A549 (cell line): ENCODE measurements at regions of chr12 and their contacts with region 1.

Region 1: DNA sequence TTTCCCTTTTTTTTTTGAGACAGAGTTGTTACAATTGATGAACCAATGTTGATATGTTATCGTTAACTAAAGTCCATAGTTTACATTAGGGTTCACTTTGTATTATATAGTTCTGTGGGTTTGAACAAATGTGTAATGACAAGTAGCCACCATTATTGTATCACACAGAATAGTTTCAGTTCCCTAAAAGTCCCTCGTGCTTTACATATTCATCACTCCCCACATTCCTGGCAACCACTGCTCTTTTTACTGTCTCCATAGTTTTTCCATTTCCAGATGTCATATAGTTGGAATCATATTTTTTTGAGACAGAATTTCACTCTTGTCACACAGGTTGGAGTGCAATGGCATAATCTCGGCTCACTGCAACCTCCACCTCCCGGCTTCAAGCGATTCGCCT is 12.5 kb downstream of the HSD17B6 start:
- DNase-seq: no peak
- ATAC-seq: no peak
- H3K4me3 ChIP-seq: no peak overlapping the region
- H3K27ac ChIP-seq: no peak overlapping the region
- H3K4me1 ChIP-seq: no peaks in the 10 kb centered on the region
- CTCF ChIP-seq: no peak
- EP300 ChIP-seq: no peak
- POLR2A ChIP-seq: no peak
- RAD21 ChIP-seq: no peak

Region 2: GRCh38 chr12:56198836-56199235 is 576.8 kb before region 1 on chr12:
- CTCF ChIA-PET with region 1: no interaction called
- POLR2A ChIA-PET with region 1: no interaction called
- DNase-seq: no peak
- ATAC-seq: no peak
- H3K4me3 ChIP-seq: no peak overlapping the region
- H3K27ac ChIP-seq: no peak overlapping the region
- H3K4me1 ChIP-seq: no peaks in the 10 kb centered on the region
- CTCF ChIP-seq: no peak
- EP300 ChIP-seq: no peak
- POLR2A ChIP-seq: no peak
- RAD21 ChIP-seq: no peak

Region 3: DNA sequence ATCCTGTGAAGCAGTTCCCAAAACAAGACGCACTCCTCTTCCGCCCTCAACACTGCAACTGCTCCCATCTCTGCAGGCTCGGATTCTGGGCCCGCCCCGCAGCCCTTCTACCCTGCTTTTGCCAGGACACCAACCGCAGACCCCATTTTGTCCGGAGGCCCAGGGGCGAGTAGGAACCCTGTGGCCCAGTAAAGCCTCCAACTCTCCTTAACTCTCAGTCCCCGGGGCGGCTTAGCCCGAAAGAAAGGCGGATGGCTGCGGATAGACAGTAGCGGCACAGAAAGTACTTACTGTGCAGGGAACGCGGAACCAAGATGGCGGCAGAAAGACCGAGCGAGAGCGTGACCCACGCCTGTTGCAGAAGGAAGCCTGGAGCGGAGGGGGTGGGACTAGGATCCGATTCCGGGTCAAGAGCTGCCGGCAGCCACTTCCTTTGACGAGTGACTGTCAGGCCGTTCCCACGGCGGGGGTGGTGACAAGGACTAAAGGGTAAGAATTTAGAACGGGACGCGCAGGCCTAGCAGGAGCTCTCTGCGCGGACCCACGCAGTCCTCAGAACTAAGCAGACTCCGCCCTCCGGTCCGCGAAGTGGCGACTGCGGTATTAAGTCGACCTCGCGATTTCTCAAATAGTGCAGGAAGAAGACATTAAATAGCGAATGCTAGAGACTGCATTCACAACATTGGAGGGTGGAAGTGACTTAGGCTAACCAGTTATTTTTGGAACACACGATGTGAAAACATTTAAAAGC is 50.5 kb before region 1 on chr12 and contains the start of gene NACA:
- CTCF ChIA-PET with region 1: no interaction called
- POLR2A ChIA-PET with region 1: no interaction called
- DNase-seq: peak; percentile 99
- ATAC-seq: peak; percentile 97 to 98
- H3K4me3 ChIP-seq: peak within 1 kb of the TSS; percentile 99
- H3K27ac ChIP-seq: peak within 1 kb of the TSS; percentile 96 to 99
- H3K4me1 ChIP-seq: peaks cover 34% of the 10 kb centered on the region
- CTCF ChIP-seq: no peak
- EP300 ChIP-seq: no peak
- POLR2A ChIP-seq: peak; percentile 94
- RAD21 ChIP-seq: no peak
- polyA plus RNA-seq, gene NACA: 993 and 1,560 TPM in 2 replicates

Region 4: DNA sequence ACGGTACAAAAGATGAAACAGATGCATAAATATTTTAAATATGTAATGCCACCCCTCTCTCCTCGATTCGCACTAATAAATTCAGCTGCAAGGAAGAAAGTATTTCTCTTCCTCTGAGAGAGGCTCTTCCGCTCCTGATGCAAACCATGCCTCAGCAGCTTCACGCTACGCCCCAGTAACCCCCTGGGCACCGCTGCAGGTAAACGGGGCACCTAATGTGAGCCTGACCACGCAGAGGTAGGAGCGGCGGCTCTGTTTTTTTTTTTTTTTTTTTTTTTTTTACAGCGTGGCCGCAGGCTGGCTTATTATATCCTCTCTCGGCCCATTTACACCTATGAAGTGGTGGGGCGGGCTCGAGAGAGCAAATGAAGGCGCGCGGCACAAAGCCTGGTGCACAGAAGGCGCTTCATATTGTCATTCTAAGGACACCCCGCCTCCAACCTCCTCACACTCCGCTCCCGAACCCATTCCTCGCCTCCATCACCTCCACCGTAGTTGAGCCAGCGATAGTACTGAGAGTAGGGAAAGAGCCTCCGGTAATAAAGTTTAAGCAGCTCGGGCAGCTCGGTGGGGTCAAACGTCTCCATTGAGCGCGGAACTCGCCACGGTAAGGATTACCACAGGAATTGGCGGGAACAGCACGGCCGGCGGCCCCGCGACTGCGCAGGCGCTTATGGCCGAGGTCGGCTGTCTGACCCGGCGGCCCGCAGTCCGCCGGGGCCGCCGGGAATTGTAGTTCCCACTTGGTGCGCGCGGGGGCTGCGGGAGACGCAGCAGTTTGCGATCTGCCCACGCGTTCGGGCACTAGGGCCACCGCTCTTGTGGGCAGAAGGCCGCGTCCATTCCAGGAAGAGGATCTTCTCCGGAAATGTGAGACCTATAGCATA is 23.7 kb before region 1 on chr12 and contains the start of gene PRIM1:
- CTCF ChIA-PET with region 1: no interaction called
- POLR2A ChIA-PET with region 1: interaction called, 10 read pairs
- DNase-seq: peak; percentile 89 to 93
- ATAC-seq: peak; percentile 95 to 96
- H3K4me3 ChIP-seq: peak within 1 kb of the TSS; percentile 67
- H3K27ac ChIP-seq: peak within 1 kb of the TSS; percentile 75 to 88
- H3K4me1 ChIP-seq: peaks cover 13% of the 10 kb centered on the region; the same call in 2 of the 3 replicates
- CTCF ChIP-seq: no peak
- EP300 ChIP-seq: no peak
- POLR2A ChIP-seq: peak; percentile 61
- RAD21 ChIP-seq: no peak
- polyA plus RNA-seq, gene PRIM1: 53.9 and 66.8 TPM in 2 replicates

Region 5: DNA sequence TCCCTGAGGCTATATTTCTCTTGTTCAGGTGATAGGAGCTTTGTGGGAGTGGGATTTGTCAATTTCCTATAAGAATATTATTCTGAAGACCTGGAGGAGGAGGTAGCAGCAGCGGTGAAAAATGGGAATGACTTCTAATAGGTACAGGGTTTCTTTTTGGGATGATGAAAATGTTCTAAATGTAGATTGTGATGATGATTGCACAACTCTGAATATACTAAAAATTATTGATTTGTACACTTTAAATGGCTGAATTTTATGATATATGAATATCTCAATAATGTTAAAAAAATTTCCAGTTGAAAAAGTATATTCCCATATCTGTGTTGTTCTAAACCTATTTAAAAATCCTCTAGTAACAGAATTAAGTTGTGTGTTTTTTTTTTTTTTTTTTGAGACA is 10.2 kb after region 1 on chr12:
- CTCF ChIA-PET with region 1: no interaction called
- POLR2A ChIA-PET with region 1: no interaction called
- DNase-seq: no peak
- ATAC-seq: no peak
- H3K4me3 ChIP-seq: no peak overlapping the region
- H3K27ac ChIP-seq: no peak overlapping the region
- H3K4me1 ChIP-seq: no peaks in the 10 kb centered on the region
- CTCF ChIP-seq: no peak
- EP300 ChIP-seq: no peak
- POLR2A ChIP-seq: no peak
- RAD21 ChIP-seq: no peak